ENCODE measurements at regions of chr4 and their contacts with region 1.

Region 1: GRCh38 chr4:35052546-35052945 is 1191.8 kb downstream of the ARAP2 start:
- DNase-seq: no peak
- H3K4me3 ChIP-seq: no peak overlapping the region
- H3K27ac ChIP-seq: no peak overlapping the region
- H3K4me1 ChIP-seq: no peaks in the 10 kb centered on the region
- H3K27me3 ChIP-seq: no peaks in the 10 kb centered on the region
- CTCF ChIP-seq: no peak
- POLR2A ChIP-seq: no peak

Region 2: GRCh38 chr4:34279011-34279410 is 773.5 kb before region 1 on chr4:
- intact Hi-C with region 1: loop called (anchors 5 kb)
- DNase-seq: no peak
- H3K4me3 ChIP-seq: no peak overlapping the region
- H3K27ac ChIP-seq: no peak overlapping the region
- H3K4me1 ChIP-seq: no peaks in the 10 kb centered on the region
- H3K27me3 ChIP-seq: no peaks in the 10 kb centered on the region
- CTCF ChIP-seq: no peak
- POLR2A ChIP-seq: no peak

Region 3: GRCh38 chr4:34502086-34502485 is 550.5 kb before region 1 on chr4:
- intact Hi-C with region 1: no loop called
- DNase-seq: no peak
- H3K4me3 ChIP-seq: no peak overlapping the region
- H3K27ac ChIP-seq: no peak overlapping the region
- H3K4me1 ChIP-seq: no peaks in the 10 kb centered on the region
- H3K27me3 ChIP-seq: no peaks in the 10 kb centered on the region
- CTCF ChIP-seq: no peak
- POLR2A ChIP-seq: no peak

Region 4: GRCh38 chr4:37043342-37043741 is 1990.8 kb after region 1 on chr4:
- intact Hi-C with region 1: no loop called
- DNase-seq: no peak
- H3K4me3 ChIP-seq: no peak overlapping the region
- H3K27ac ChIP-seq: no peak overlapping the region
- H3K4me1 ChIP-seq: no peaks in the 10 kb centered on the region
- H3K27me3 ChIP-seq: no peaks in the 10 kb centered on the region
- CTCF ChIP-seq: no peak
- POLR2A ChIP-seq: no peak